CD4-positive, alpha-beta memory T cell (primary cell): ENCODE measurements at regions of chr17 and their contacts with region 1.

Region 1: DNA sequence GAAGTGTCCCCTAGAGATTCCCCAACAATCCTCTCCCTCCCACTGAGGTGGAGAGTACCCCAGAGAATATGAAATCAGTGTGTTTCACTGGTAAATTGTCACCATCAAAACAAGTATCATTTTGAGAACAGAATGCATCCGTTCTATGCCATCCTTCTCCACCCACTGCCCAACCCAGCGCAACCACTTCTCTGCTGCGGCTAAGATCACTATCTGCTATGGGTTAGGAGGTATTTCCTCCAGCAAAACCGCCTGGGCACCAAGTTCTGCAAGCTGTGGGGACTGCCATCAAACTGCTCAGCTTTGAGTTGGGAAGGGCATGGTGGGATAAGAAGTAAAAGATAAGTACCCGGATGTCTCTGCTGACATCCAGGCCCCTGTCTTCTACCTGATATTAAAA is 24.4 kb downstream of the CNTNAP1 start:
- DNase-seq: peak; percentile 73 to 79 (median 78)
- H3K4me3 ChIP-seq: no peak overlapping the region
- H3K4me3 Mint-ChIP-seq: peak overlapping the region; percentile 64 to 84 (median 74)
- H3K27ac ChIP-seq: peak overlapping the region; percentile 9
- H3K27ac Mint-ChIP-seq: peak overlapping the region in 6 of 7 donors; percentile 9 to 74 (median 30)
- H3K4me1 ChIP-seq: peaks cover 58% of the 10 kb centered on the region
- H3K4me1 Mint-ChIP-seq: peaks cover 29 to 73% (median 40%) of the 10 kb centered on the region in 4 donors
- H3K27me3 ChIP-seq: no peaks in the 10 kb centered on the region
- H3K27me3 Mint-ChIP-seq: no peaks in the 10 kb centered on the region

Region 2: GRCh38 chr17:42632949-42633444 is 73.7 kb before region 1 on chr17:
- CTCF ChIA-PET with region 1: no interaction called
- POLR2A ChIA-PET with region 1: no interaction called
- intact Hi-C with region 1: no loop called
- DNase-seq: no peak
- H3K4me3 ChIP-seq: no peak overlapping the region
- H3K4me3 Mint-ChIP-seq: no peak overlapping the region
- H3K27ac ChIP-seq: no peak overlapping the region
- H3K27ac Mint-ChIP-seq: peak overlapping the region in 1 of 7 donors; percentile 65
- H3K4me1 ChIP-seq: no peaks in the 10 kb centered on the region
- H3K4me1 Mint-ChIP-seq: no peaks in the 10 kb centered on the region
- H3K27me3 ChIP-seq: no peaks in the 10 kb centered on the region
- H3K27me3 Mint-ChIP-seq: no peaks in the 10 kb centered on the region

Region 3: GRCh38 chr17:42677008-42677857 is 29.5 kb before region 1 on chr17:
- CTCF ChIA-PET with region 1: interaction called, 3 read pairs
- POLR2A ChIA-PET with region 1: interaction called, 3 read pairs
- intact Hi-C with region 1: loop called (anchors 2 kb)
- DNase-seq: peak; percentile 91 to 98 (median 93)
- H3K4me3 ChIP-seq: peak overlapping the region; percentile 63 to 75
- H3K4me3 Mint-ChIP-seq: peak overlapping the region; percentile 86 to 97 (median 90)
- H3K27ac ChIP-seq: peak overlapping the region; percentile 42
- H3K27ac Mint-ChIP-seq: peak overlapping the region; percentile 79 to 94 (median 89)
- H3K4me1 ChIP-seq: peaks cover 74% of the 10 kb centered on the region
- H3K4me1 Mint-ChIP-seq: peaks cover 32 to 70% (median 46%) of the 10 kb centered on the region in 4 donors
- H3K27me3 ChIP-seq: peaks cover 36% of the 10 kb centered on the region
- H3K27me3 Mint-ChIP-seq: peaks cover 23 to 27% of the 10 kb centered on the region in 2 donors

Region 4: GRCh38 chr17:42695500-42695899 is 11.2 kb before region 1 on chr17:
- CTCF ChIA-PET with region 1: no interaction called
- POLR2A ChIA-PET with region 1: no interaction called
- intact Hi-C with region 1: no loop called
- DNase-seq: no peak
- H3K4me3 ChIP-seq: no peak overlapping the region
- H3K4me3 Mint-ChIP-seq: no peak overlapping the region
- H3K27ac ChIP-seq: no peak overlapping the region
- H3K27ac Mint-ChIP-seq: no peak overlapping the region
- H3K4me1 ChIP-seq: no peaks in the 10 kb centered on the region
- H3K4me1 Mint-ChIP-seq: peaks cover 0 to 5% (median 1%) of the 10 kb centered on the region in 4 donors
- H3K27me3 ChIP-seq: no peaks in the 10 kb centered on the region
- H3K27me3 Mint-ChIP-seq: no peaks in the 10 kb centered on the region